ENCODE measurements at regions of chr2 and their contacts with region 1.

Region 1: DNA sequence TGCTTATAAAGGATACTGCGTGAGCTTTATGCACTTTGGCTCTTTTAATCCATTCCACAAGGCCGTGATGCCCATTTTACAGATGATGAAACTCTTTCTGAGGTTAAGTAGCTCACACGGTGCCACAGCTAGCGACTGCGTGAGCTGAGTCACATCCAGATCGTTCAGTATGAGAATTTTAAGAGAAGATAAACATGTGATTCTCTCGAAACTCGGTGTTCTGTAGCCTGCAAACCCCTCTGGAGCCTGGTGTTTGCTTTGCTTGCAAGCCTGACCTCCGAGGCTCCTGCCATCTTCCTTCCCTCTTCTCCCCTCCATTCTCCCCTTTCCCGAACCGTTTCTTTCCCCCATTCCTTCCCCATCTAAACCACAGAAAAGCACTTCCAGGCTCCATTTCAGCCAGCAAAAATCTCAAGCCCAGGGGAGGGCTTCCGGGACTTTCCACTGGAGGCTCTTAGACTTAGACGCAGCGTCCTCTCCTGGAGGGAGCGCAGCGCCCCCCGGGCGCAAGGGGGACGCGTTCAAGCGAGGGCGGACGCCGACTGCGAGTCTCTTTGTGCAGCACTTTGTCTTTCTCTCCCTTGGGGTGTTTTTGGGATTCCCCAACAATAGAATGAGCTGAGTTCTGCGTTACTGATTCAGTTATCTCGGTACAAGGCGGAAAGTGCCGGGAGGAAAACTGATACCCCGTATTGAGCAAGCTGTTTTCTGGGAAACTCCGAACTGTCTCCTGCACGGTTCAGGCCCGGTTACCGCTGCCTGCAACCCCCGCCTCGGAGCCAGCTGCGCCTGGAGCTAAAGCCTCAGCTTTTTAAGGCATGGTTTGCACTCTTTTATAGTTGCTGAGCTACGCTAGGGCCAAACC is 38.0 kb downstream of the CYP1B1 start:
- DNase-seq: peak; percentile 64
- H3K4me3 Mint-ChIP-seq: peak overlapping the region; percentile 68
- H3K27ac Mint-ChIP-seq: peak overlapping the region; percentile 76
- H3K4me1 Mint-ChIP-seq: peaks cover 16% of the 10 kb centered on the region
- H3K27me3 Mint-ChIP-seq: peaks cover 45% of the 10 kb centered on the region

Region 2: GRCh38 chr2:37877457-37878315 is 160.3 kb before region 1 on chr2:
- CTCF ChIA-PET with region 1: no interaction called
- intact Hi-C with region 1: no loop called
- DNase-seq: peak; percentile 55
- H3K4me3 Mint-ChIP-seq: no peak overlapping the region
- H3K27ac Mint-ChIP-seq: no peak overlapping the region
- H3K4me1 Mint-ChIP-seq: peaks cover 7% of the 10 kb centered on the region
- H3K27me3 Mint-ChIP-seq: peaks cover 15% of the 10 kb centered on the region

Region 3: DNA sequence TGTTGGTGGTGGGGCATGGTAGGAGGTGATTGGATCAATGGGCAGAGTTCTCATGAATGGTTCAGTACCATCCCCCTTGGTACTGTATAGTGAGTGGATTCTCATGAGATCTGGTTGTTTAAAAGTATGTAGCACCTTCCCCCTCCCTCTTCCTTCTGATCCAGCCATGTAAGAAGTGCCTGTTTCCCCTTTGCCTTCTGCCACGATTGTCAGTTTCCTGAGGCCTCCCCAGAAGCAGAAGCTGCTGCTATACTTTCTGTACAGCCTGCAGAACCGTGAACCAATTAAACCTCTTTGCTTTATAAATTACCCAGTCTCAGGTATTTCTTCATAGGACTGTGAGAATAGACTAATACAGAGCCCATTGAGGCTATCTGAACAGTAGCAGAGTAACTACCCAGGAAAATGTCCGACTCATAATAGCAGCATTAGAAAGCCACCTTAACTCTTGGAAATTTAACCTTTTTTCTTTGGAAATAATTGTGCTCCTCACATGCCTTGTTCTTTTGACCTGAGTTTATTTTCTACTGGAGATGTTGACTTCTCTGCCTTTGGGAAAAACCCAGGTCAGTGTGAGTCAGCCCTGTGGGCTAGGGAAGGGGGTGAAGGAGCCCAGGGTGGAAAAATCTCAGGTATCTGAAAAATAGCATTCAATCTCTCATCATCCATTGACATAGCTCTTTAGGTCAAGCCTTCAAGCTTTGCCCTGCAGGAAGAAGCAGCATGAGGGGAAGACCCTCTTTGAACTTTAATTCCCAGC is 19.8 kb after region 1 on chr2:
- CTCF ChIA-PET with region 1: no interaction called
- intact Hi-C with region 1: loop called (anchors 1 kb)
- DNase-seq: peak; percentile 27
- H3K4me3 Mint-ChIP-seq: no peak overlapping the region
- H3K27ac Mint-ChIP-seq: no peak overlapping the region
- H3K4me1 Mint-ChIP-seq: peaks cover 19% of the 10 kb centered on the region
- H3K27me3 Mint-ChIP-seq: peaks cover 2% of the 10 kb centered on the region